ENCODE measurements at regions of chr3 and their contacts with region 1.

Region 1: DNA sequence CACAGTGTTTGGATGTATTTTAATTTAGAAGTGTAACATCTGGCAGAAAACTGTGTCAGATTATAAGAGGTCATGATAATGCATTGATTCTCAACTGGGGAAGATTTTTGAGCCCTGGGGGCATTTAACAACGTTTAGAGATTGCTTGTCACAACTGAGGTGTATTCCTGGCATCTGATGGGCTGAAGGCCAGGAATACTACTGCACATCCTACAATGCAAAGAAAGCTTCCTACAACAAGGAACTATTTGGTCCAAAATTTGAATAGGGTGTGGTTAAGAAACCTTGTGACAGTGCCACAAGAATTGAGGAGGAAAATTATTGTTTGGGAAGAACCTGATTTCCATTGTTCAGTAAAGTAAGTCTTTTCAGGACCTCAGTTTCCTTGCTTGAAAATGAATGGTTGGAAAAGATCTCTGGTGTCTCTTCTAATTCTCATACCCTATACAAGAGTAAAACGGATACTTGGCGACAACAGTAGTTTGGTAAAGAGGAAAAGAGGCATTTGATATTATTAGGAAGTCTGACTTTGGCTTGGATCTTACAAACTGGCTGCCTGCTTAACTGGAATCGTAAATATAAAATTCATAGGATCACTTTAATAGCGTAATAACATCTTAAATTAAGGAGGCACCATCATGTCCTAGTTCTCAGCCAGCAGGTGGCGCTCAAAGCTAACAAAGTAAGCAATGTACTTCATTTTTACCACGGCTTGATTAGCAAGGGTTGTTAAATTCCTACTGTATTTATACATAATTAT is 4.3 kb downstream of the DAZL start:
- DNase-seq: peak; percentile 61 to 74 (median 70)
- H3K4me3 ChIP-seq: no peak overlapping the region
- H3K4me3 Mint-ChIP-seq: no peak overlapping the region
- H3K27ac ChIP-seq: no peak overlapping the region
- H3K27ac Mint-ChIP-seq: no peak overlapping the region
- H3K4me1 ChIP-seq: no peaks in the 10 kb centered on the region
- H3K4me1 Mint-ChIP-seq: peaks cover 4% of the 10 kb centered on the region
- H3K27me3 ChIP-seq: no peaks in the 10 kb centered on the region
- H3K27me3 Mint-ChIP-seq: peaks cover 0 to 8% (median 1%) of the 10 kb centered on the region in 3 donors
- CTCF ChIP-seq: peak; percentile 95

Region 2: GRCh38 chr3:17227472-17227871 is 626.5 kb after region 1 on chr3:
- intact Hi-C with region 1: loop called (anchors 5 kb)
- DNase-seq: no peak
- H3K4me3 ChIP-seq: no peak overlapping the region
- H3K4me3 Mint-ChIP-seq: no peak overlapping the region
- H3K27ac ChIP-seq: no peak overlapping the region
- H3K27ac Mint-ChIP-seq: no peak overlapping the region
- H3K4me1 ChIP-seq: no peaks in the 10 kb centered on the region
- H3K4me1 Mint-ChIP-seq: no peaks in the 10 kb centered on the region
- H3K27me3 ChIP-seq: no peaks in the 10 kb centered on the region
- H3K27me3 Mint-ChIP-seq: no peaks in the 10 kb centered on the region
- CTCF ChIP-seq: no peak

Region 3: GRCh38 chr3:17233398-17233800 is 632.4 kb after region 1 on chr3:
- intact Hi-C with region 1: loop called (anchors 5 kb)
- DNase-seq: peak; percentile 11 to 31 (median 19)
- H3K4me3 ChIP-seq: no peak overlapping the region
- H3K4me3 Mint-ChIP-seq: no peak overlapping the region
- H3K27ac ChIP-seq: no peak overlapping the region
- H3K27ac Mint-ChIP-seq: peak overlapping the region in 1 of 7 donors; percentile 13
- H3K4me1 ChIP-seq: peaks cover 0 to 6% of the 10 kb centered on the region in 2 donors
- H3K4me1 Mint-ChIP-seq: peaks cover 6% of the 10 kb centered on the region
- H3K27me3 ChIP-seq: no peaks in the 10 kb centered on the region
- H3K27me3 Mint-ChIP-seq: peaks cover 0 to 1% (median 0%) of the 10 kb centered on the region in 3 donors
- CTCF ChIP-seq: peak; percentile 73

Region 4: GRCh38 chr3:17412950-17413530 is 812.1 kb after region 1 on chr3:
- intact Hi-C with region 1: loop called in 1 of 2 experiments (anchors 5 kb)
- DNase-seq: peak; percentile 18 to 53 (median 43)
- H3K4me3 ChIP-seq: no peak overlapping the region
- H3K4me3 Mint-ChIP-seq: no peak overlapping the region
- H3K27ac ChIP-seq: no peak overlapping the region
- H3K27ac Mint-ChIP-seq: no peak overlapping the region
- H3K4me1 ChIP-seq: no peaks in the 10 kb centered on the region
- H3K4me1 Mint-ChIP-seq: no peaks in the 10 kb centered on the region
- H3K27me3 ChIP-seq: no peaks in the 10 kb centered on the region
- H3K27me3 Mint-ChIP-seq: no peaks in the 10 kb centered on the region
- CTCF ChIP-seq: peak; percentile 87

Measured in CD14-positive monocyte (primary cell).